ENCODE measurements at regions of chr6 and their contacts with region 1.

Region 1: GRCh38 chr6:32692019-32692418 is 25.6 kb upstream of the HLA-DQB1 start:
- DNase-seq: peak in 1 of 5 donors; percentile 13
- H3K4me3 ChIP-seq: no peak overlapping the region
- H3K27ac ChIP-seq: no peak overlapping the region
- H3K4me1 ChIP-seq: no peaks in the 10 kb centered on the region
- H3K27me3 ChIP-seq: no peaks in the 10 kb centered on the region
- CTCF ChIP-seq: no peak
- EP300 ChIP-seq: no peak
- POLR2A ChIP-seq: no peak

Region 2: GRCh38 chr6:32439602-32440214 is 252.3 kb before region 1 on chr6 and contains the start of gene HLA-DRA:
- intact Hi-C with region 1: loop called in 2 of 4 experiments (anchors 5 to 10 kb)
- DNase-seq: no peak
- H3K4me3 ChIP-seq: no peak within 1 kb of the TSS
- H3K27ac ChIP-seq: no peak within 1 kb of the TSS
- H3K4me1 ChIP-seq: no peaks in the 10 kb centered on the region
- H3K27me3 ChIP-seq: no peaks in the 10 kb centered on the region
- CTCF ChIP-seq: no peak
- EP300 ChIP-seq: no peak
- POLR2A ChIP-seq: no peak
- total RNA-seq, gene HLA-DRA: 19.5 to 262 (median 130) TPM

Measured in ovary (tissue), 10 donors.